ENCODE measurements at regions of chr16 and their contacts with region 1.

Region 1: DNA sequence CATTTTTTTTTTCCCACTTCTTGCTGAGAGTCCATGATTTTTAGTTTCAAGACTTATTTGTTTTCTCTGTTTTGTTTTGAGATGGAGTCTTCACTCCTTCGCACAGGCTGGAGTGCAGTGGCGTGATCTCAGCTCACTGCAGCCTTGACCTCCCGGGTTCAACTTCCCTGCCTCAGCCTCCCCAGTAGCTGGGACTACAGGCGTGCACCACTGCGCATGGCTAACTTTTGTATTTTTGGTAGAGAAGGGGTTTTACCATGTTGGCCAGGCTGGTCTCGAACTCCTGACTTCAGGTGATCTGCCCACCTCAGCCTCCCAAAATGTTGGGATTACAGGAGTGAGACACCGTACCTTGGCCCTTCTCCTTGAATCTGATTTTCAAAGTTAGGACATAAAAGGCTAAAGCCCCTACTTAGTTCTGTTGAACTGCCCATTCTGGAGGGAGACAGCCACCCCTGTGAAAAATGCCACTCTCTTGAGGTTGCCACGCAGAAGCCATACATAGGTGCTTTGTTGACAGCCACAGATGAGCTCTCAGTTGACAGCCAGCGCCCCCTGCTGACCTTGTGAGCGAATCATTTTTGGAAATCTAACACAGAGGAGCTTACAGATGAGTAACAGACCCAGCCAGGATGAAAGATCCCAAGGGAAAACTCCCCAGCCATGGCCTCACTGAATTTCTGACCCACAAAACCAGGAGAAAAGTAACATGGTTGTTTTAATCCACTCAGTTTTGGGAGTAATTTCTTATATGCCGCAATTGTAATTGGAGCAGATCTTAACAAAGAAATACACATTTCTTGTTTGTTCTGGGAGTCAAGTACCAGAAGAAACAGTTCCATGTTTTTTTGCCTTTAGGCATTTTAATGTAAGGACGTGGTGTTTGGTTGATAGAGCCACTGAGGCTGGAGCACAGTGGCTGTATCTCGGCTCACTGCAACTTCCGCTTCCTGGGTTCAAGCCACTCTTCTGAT is 38.8 kb downstream of the PKD1L3 start:
- DNase-seq: peak; percentile 59
- H3K4me3 ChIP-seq: no peak overlapping the region
- CTCF ChIP-seq: peak; percentile 86

Region 2: DNA sequence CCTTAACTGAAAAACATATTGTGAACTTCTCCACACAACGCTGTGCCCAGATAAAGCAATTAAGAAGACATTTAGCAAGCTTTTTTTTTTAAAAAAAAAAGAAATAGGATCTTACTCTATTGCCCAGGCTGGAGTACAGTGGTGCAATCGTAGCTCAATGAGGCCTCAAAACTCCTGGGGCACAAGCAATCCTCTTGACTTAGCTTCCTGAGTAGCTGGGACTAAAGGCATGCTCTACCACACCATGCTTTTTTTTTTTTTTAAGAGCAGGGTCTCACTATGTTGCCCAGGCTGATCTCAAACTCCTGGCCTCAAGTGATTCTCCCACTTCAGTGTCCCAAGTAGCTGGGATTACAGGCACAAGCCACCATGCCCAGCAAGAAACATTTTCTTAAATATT is 172.8 kb before region 1 on chr16:
- CTCF ChIA-PET with region 1: interaction called, 10 read pairs
- POLR2A ChIA-PET with region 1: no interaction called
- DNase-seq: no peak
- H3K4me3 ChIP-seq: no peak overlapping the region
- CTCF ChIP-seq: no peak

Region 3: DNA sequence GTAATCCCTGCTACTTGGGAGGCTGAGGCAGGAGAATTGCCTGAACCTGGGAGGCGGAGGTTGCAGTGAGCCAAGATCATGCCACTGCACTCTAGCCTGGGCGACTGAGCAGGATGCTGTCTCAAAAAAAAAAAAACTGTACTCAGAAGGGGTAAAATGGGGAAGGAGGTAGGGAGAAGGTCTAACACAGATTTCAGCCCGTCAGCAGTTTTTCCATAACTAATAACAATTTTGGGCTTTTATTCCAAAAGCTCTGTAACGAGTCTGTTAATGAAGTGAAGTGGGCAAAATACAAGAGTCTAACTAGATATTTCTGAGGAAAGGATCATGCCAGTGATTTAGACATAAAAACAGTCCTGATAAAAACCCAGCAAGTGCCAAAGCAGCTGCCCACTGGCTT is 88.2 kb before region 1 on chr16:
- CTCF ChIA-PET with region 1: interaction called, 10 read pairs
- POLR2A ChIA-PET with region 1: no interaction called
- DNase-seq: no peak
- H3K4me3 ChIP-seq: no peak overlapping the region
- CTCF ChIP-seq: no peak

Region 4: GRCh38 chr16:71929048-71929447 is 32.3 kb before region 1 on chr16:
- CTCF ChIA-PET with region 1: interaction called, 10 read pairs
- POLR2A ChIA-PET with region 1: interaction called, 3 read pairs
- DNase-seq: peak; percentile 57
- H3K4me3 ChIP-seq: no peak overlapping the region
- CTCF ChIP-seq: no peak

Measured in AG04449 (cell line).